Heart left ventricle (tissue), 16 donors: ENCODE measurements at regions of chr1 and their contacts with region 1.

Region 1: GRCh38 chr1:179365320-179366092 is at the start of gene AXDND1:
- DNase-seq: peak; percentile 87 to 93 (median 88)
- ATAC-seq: peak; percentile 90 to 98 (median 98)
- H3K4me3 ChIP-seq: peak within 1 kb of the TSS; percentile 50 to 79 (median 70)
- H3K27ac ChIP-seq: peak within 1 kb of the TSS; percentile 72 to 99 (median 90)
- H3K4me1 ChIP-seq: peaks cover 0 to 10% (median 1%) of the 10 kb centered on the region in 12 donors
- H3K27me3 ChIP-seq: no peaks in the 10 kb centered on the region
- CTCF ChIP-seq: peak in 2 of 12 donors; percentile 31 to 57
- POLR2A ChIP-seq: peak in 1 of 2 donors; percentile 52
- total RNA-seq, gene AXDND1: 0.08 to 0.16 TPM in 2 of 9 donors, not detected in the others

Region 2: DNA sequence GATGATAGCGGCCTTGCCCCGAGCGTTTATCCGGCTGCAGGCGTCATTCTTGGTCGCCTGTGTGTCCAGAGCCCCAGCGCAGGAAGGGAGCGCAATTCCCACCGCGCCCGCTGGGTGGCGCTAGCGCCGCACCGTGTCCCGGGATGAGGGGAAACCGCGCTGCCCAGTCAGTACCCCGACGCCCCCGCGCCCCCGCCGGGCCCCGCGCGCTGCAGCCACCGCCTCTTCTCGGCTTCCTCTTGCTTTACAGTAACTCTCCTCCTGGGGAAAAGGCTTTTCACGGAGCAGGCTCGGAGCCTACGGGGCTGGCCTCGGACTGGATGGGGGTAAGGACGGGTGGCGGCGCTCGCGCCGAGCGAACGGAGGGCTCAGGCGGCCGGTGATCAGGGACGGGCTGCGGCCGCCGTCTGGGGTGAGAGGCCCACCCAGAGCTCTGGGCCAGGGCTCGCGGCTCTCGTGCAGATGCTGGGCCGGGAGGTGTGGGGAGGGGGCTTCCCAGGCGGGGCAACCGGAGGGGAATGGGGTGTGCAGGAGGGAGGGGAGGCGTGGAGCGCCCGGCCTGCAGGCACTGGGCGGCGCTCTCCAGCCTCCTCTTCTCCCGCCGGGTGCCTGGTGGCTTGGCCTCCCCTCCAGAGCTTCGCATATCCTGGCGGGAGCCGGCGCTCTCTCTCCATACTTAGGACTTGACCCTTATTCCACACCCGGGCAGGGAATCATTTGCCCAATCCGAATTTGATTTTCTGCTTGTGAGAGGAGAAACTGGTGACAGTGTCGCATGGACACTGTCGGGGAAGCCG is 822.7 kb before region 1 on chr1:
- intact Hi-C with region 1: loop called in 1 of 10 experiments (anchors 10 kb)
- DNase-seq: peak; percentile 86 to 95 (median 88)
- ATAC-seq: peak; percentile 83 to 94 (median 93)
- H3K4me3 ChIP-seq: peak overlapping the region; percentile 62 to 86 (median 76)
- H3K27ac ChIP-seq: peak overlapping the region; percentile 51 to 90 (median 84)
- H3K4me1 ChIP-seq: peaks cover 0 to 25% (median 10%) of the 10 kb centered on the region in 12 donors
- H3K27me3 ChIP-seq: no peaks in the 10 kb centered on the region
- CTCF ChIP-seq: peak; percentile 92 to 100 (median 98)
- POLR2A ChIP-seq: no peak

Region 3: GRCh38 chr1:179081687-179082332 is 283.7 kb before region 1 on chr1 and contains the start of gene TOR3A:
- intact Hi-C with region 1: loop called (anchors 1 to 5 kb)
- DNase-seq: peak; percentile 94 to 95 (median 95)
- ATAC-seq: peak; percentile 97 to 99 (median 98)
- H3K4me3 ChIP-seq: peak within 1 kb of the TSS; percentile 72 to 100 (median 92)
- H3K27ac ChIP-seq: peak within 1 kb of the TSS; percentile 68 to 93 (median 89)
- H3K4me1 ChIP-seq: peaks cover 0 to 31% (median 16%) of the 10 kb centered on the region in 12 donors
- H3K27me3 ChIP-seq: no peaks in the 10 kb centered on the region
- CTCF ChIP-seq: peak in 1 of 12 donors; percentile 13
- POLR2A ChIP-seq: peak in 1 of 2 donors; percentile 91
- total RNA-seq, gene TOR3A: 6.3 to 22.4 (median 9.9) TPM

Region 4: GRCh38 chr1:179129702-179130473 is 235.6 kb before region 1 on chr1:
- intact Hi-C with region 1: loop called in 2 of 10 experiments (anchors 5 kb)
- DNase-seq: no peak
- ATAC-seq: peak; percentile 52 to 77 (median 58)
- H3K4me3 ChIP-seq: peak overlapping the region in 10 of 12 donors; percentile 26 to 52 (median 38)
- H3K27ac ChIP-seq: peak overlapping the region; percentile 6 to 90 (median 62)
- H3K4me1 ChIP-seq: peaks cover 0 to 51% (median 15%) of the 10 kb centered on the region in 12 donors
- H3K27me3 ChIP-seq: no peaks in the 10 kb centered on the region
- CTCF ChIP-seq: no peak
- POLR2A ChIP-seq: no peak

Region 5: GRCh38 chr1:179251675-179252074 is 113.8 kb before region 1 on chr1:
- intact Hi-C with region 1: loop called (anchors 2 to 10 kb)
- DNase-seq: no peak
- ATAC-seq: peak in 3 of 4 donors; percentile 49 to 59 (median 56)
- H3K4me3 ChIP-seq: no peak overlapping the region
- H3K27ac ChIP-seq: no peak overlapping the region
- H3K4me1 ChIP-seq: no peaks in the 10 kb centered on the region
- H3K27me3 ChIP-seq: no peaks in the 10 kb centered on the region
- CTCF ChIP-seq: peak in 10 of 12 donors; percentile 17 to 52 (median 38)
- POLR2A ChIP-seq: no peak